BJ (cell line): ENCODE measurements at regions of chr11 and their contacts with region 1.

Region 1: DNA sequence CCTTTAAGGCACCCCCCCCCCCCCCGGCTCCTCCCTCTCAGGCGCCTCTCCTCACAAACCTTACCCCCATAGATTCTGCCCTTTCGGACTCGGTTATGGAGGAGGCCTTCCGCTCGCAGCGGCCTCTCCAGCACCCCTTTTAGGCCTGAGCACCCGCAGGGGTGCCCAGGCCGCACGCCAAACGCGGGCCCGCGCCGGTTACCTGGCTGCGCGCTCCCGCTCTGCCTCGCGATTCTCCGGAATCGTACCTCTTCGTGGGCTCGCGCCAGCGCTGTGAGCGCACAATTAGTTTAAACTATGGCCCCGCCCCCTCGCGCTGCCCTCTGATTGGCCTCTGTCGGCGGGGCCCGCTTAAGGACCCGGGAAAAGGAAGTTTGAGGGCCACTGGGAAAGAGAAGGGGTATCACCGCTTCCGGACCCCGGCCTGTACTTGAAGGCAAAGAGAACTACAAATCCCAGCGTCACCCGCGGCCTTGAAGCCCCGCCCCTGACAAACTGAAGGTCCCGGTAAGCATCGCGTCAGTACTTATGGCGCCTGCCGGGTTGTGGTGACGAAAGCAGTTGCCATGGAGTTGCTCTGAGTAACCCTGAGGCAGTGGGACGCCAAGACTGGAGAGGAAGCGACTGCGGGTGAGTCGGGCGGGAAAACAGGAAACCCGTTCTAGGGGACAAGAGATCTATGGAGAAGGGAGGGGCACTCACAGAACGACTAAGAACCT is at the starts of genes LRRC51 and NUMA1:
- DNase-seq: peak; percentile 100
- H3K4me3 ChIP-seq: peak within 1 kb of the TSS; percentile 87
- H3K27me3 ChIP-seq: no peaks in the 10 kb centered on the region
- CTCF ChIP-seq: no peak
- polyA plus RNA-seq, gene LRRC51: 9.8 TPM in 2 replicates
- polyA plus RNA-seq, gene NUMA1: 87.1 and 120 TPM in 2 replicates

Region 2: GRCh38 chr11:72024069-72024754 is 56.2 kb before region 1 on chr11:
- CTCF ChIA-PET with region 1: interaction called, 31 read pairs
- POLR2A ChIA-PET with region 1: no interaction called
- DNase-seq: no peak
- H3K4me3 ChIP-seq: no peak overlapping the region
- H3K27me3 ChIP-seq: no peaks in the 10 kb centered on the region
- CTCF ChIP-seq: no peak